ENCODE measurements at regions of chr6 and their contacts with region 1.

Region 1: DNA sequence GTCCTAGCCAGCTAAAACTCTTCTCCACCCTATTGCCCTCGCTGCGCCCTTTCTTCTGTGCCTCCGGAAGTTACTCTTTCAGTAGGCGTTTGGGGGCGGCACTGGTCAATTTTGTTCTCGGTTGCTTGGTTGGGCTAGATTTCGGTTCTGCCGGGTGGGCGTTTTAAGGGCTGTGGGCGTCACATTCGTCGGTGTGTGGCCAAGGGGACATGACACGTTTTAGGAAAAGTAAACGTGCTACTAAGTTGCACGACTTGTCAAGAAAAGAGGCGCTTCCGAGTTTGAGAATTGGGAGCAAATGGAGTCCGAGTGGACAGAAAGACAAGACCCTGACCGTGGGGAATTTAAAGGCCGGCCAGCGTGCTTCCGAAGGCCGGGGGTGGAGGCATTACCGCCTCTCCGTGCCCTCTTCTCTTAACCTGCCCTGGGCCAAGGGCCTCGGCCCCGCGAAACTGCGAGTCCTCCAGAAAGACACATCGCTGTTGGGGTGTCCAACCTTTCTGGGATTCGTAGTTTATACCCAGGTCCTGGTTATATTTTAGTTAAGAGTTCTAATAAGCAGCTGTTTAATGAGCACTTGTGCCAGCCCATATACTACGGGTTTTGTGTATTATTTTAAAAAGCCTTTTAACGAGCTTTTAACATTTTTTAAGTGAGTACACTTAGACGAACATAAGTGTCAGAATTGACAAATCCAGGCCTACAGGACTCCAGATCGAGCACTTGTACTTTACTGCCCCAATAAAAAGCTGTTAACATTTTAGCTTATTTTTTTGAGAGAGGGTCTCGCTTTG is 661 bp upstream of the BAG6 start:
- DNase-seq: peak; percentile 94 to 99 (median 96)
- ATAC-seq: peak; percentile 83
- H3K4me3 ChIP-seq: peak overlapping the region; percentile 73
- H3K27ac ChIP-seq: peak overlapping the region; percentile 98
- H3K4me1 ChIP-seq: peaks cover 22 to 26% of the 10 kb centered on the region in 2 experiments
- H3K27me3 ChIP-seq: no peaks in the 10 kb centered on the region
- CTCF ChIP-seq: peak; percentile 43 to 72 (median 54)
- EP300 ChIP-seq: no peak; the same call in 1 of the 2 replicates
- POLR2A ChIP-seq: peak; percentile 98
- RAD21 ChIP-seq: peak in 1 of 2 experiments; percentile 52; a peak in 2 of 4 replicates

Region 2: DNA sequence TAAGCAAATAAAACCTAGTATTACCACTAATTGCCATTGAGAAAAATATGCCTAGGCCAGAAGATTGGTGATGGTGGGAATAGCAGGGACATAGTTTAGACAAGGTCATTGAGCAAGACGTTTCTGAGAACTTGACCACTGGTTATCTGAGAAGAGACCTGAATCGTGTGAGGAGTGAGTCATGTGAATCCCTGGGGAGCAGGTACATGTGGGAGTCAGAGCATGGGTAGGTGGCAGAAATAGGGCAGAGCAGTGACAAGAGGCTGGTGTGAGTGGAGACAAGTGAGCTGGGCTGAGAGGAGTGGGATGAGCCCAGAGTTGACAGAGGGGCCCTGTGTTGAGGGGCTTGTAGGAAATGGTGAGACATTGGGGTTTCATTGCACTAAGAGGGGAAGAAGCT is 233.3 kb before region 1 on chr6:
- CTCF ChIA-PET with region 1: no interaction called
- POLR2A ChIA-PET with region 1: no interaction called
- in situ Hi-C with region 1: no loop called
- intact Hi-C with region 1: no loop called
- DNase-seq: peak in 1 of 4 experiments; percentile 28
- ATAC-seq: no peak
- H3K4me3 ChIP-seq: no peak overlapping the region
- H3K27ac ChIP-seq: no peak overlapping the region
- H3K4me1 ChIP-seq: peaks cover 0 to 5% of the 10 kb centered on the region in 2 experiments; a peak in 3 of 5 replicates
- H3K27me3 ChIP-seq: peaks cover 0 to 14% of the 10 kb centered on the region in 2 experiments; a peak in 2 of 5 replicates
- CTCF ChIP-seq: no peak
- EP300 ChIP-seq: no peak
- POLR2A ChIP-seq: no peak
- RAD21 ChIP-seq: no peak

Region 3: DNA sequence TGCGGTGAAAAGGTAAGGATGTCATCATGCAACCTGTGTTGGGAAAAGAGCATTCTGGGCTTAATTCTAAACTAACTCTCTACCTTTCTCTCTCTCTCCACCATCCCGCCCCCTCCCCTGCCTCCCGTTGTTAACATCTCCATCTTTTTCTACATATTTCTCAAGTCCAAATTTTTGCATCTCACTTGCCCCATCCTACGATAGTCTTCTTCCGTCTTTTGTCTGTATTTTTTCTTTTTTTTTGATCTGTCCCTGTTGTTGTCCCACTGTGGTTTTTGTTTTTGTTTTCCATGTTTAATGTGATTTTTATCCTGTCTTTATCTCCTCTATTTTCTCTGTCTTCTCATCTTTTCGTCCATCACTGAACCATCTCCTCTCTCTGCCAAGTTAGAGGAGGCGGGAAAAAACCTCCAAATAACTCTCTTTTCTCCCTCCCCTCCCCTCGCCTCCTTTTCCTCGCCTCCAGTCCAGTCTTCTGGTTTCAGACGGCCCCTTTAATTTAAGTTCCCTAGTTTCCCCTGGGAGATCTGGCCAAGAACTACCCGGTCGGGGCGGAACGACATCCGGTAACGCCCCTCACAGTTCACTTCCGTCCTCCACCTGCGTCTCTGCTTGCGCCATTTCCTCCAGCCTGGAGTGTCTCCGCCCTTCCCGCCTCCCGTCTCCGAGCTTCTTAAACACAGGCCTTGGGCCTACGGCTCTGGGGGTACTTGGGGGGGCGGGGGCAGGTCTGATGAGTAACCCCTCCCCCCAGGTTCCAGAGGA is 106.0 kb before region 1 on chr6 and contains the start of gene NFKBIL1:
- CTCF ChIA-PET with region 1: no interaction called
- POLR2A ChIA-PET with region 1: interaction called, 14 read pairs
- in situ Hi-C with region 1: no loop called
- intact Hi-C with region 1: loop called (anchors 1 kb)
- DNase-seq: peak; percentile 92 to 100 (median 94)
- ATAC-seq: peak; percentile 93
- H3K4me3 ChIP-seq: peak within 1 kb of the TSS; percentile 52
- H3K27ac ChIP-seq: peak within 1 kb of the TSS; percentile 81
- H3K4me1 ChIP-seq: peaks cover 10 to 14% of the 10 kb centered on the region in 2 experiments; a peak in 4 of 5 replicates
- H3K27me3 ChIP-seq: no peaks in the 10 kb centered on the region
- CTCF ChIP-seq: no peak; a peak in 1 of 6 replicates
- EP300 ChIP-seq: peak; percentile 37; the same call in 1 of the 2 replicates
- POLR2A ChIP-seq: peak; percentile 71
- RAD21 ChIP-seq: peak in 1 of 2 experiments; percentile 14; a peak in 1 of 4 replicates
- polyA plus RNA-seq, gene NFKBIL1: 0.49 to 0.59 TPM

Region 4: DNA sequence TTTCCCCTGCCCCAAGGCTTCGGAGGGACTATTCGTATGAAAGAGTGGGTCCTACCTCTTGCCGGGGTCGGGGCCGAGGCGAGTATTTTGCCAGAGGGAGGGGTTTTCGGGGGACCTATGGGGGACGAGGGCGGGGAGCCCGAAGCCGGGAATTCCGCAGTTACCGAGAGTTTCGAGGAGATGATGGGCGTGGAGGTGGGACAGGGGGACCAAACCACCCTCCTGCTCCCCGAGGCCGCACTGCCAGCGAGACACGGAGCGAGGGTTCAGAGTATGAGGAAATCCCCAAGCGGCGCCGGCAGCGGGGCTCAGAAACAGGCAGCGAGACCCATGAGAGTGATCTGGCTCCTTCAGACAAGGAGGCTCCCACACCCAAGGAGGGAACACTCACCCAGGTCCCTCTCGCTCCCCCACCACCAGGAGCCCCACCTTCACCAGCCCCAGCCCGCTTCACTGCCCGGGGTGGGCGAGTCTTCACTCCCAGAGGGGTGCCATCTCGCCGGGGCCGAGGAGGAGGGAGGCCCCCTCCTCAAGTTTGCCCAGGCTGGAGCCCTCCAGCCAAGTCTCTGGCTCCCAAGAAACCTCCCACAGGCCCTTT is 21.3 kb before region 1 on chr6:
- CTCF ChIA-PET with region 1: no interaction called
- POLR2A ChIA-PET with region 1: interaction called, 190 read pairs
- in situ Hi-C with region 1: no loop called
- intact Hi-C with region 1: no loop called
- DNase-seq: no peak
- ATAC-seq: peak; percentile 32
- H3K4me3 ChIP-seq: no peak overlapping the region
- H3K27ac ChIP-seq: no peak overlapping the region
- H3K4me1 ChIP-seq: peaks cover 0 to 26% of the 10 kb centered on the region in 2 experiments; a peak in 1 of 5 replicates
- H3K27me3 ChIP-seq: no peaks in the 10 kb centered on the region
- CTCF ChIP-seq: no peak
- EP300 ChIP-seq: no peak
- POLR2A ChIP-seq: no peak
- RAD21 ChIP-seq: no peak

Region 5: DNA sequence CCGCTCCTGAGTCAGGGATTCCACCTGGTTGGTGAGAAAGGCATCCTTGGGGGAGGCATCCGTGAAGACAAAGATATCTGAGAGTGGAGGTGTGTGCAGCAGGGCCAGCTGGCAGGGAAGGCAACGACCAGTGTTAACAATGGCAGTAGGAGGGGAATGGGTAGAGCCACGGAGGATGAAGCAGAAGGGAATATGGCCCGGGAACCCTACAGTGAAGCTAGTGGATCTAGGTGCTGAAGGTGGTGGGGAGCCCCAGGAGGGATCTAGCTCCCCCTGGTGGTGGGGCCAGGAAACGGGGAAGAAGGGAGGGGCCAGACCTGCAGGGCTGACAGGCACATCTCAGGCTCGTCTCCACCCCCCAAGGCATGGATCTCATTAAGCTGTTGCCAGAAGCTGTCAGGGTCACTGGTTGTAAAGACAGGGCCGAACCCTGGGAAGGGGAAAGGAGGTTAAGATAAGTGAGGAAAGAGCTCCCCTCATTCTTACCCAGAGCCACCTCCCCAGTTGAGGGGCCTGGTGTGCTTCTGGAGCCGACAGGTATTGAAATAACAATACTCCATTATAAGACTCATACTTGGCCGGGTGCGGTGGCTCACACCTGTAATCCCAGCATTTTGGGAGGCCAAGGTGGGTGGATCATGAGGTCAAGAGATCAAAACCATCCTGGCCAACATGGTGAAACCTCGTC is 116.7 kb after region 1 on chr6:
- CTCF ChIA-PET with region 1: no interaction called
- POLR2A ChIA-PET with region 1: interaction called, 16 read pairs
- in situ Hi-C with region 1: no loop called
- intact Hi-C with region 1: no loop called
- DNase-seq: peak; percentile 98 to 100 (median 100)
- ATAC-seq: peak; percentile 91
- H3K4me3 ChIP-seq: no peak overlapping the region
- H3K27ac ChIP-seq: peak overlapping the region; percentile 26; the same call in 2 of the 3 replicates
- H3K4me1 ChIP-seq: peaks cover 24 to 68% of the 10 kb centered on the region in 2 experiments
- H3K27me3 ChIP-seq: no peaks in the 10 kb centered on the region
- CTCF ChIP-seq: peak; percentile 98 to 100 (median 99)
- EP300 ChIP-seq: peak; percentile 28
- POLR2A ChIP-seq: no peak
- RAD21 ChIP-seq: peak; percentile 99 to 100

Region 6: GRCh38 chr6:31822036-31822821 is 169.1 kb after region 1 on chr6:
- CTCF ChIA-PET with region 1: no interaction called
- POLR2A ChIA-PET with region 1: interaction called, 16 read pairs
- in situ Hi-C with region 1: no loop called
- intact Hi-C with region 1: no loop called
- DNase-seq: peak; percentile 95 to 100 (median 96)
- ATAC-seq: peak; percentile 77
- H3K4me3 ChIP-seq: peak overlapping the region; percentile 59
- H3K27ac ChIP-seq: peak overlapping the region; percentile 99
- H3K4me1 ChIP-seq: peaks cover 51 to 58% of the 10 kb centered on the region in 2 experiments
- H3K27me3 ChIP-seq: no peaks in the 10 kb centered on the region
- CTCF ChIP-seq: no peak; a peak in 1 of 6 replicates
- EP300 ChIP-seq: peak; percentile 77
- POLR2A ChIP-seq: peak; percentile 91
- RAD21 ChIP-seq: no peak; a peak in 1 of 4 replicates

Region 7: DNA sequence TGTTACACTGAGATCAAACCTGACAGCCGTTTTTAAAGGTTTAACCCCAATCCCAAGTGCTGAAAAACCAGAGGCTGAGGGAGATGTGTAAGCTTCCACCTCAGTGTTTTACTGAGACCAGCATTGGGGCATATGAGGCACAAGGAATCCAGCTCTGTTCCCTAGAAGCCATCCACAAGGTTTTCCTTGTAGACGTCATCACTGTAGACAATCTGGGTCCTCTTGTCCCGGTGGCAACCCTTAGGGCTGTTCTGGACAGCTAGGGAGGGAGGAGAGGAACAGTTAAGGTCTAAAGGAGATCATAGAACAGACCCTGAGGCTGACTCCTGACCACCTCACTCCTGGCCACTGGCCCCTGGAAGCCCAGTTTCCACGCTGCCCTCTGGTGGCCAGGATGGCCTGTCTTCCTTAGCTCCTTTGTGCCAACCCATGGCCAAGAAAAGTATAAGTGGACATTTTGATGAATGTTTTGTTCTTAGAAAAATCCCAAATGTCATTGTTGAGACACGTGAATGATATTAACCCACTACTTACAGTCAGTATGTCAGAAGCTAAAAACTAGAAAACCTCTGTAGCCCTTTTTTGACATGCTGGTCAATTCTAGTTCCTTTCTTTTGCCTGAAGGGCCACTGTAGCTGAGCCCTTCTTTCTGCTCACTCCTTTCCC is 299.2 kb after region 1 on chr6:
- CTCF ChIA-PET with region 1: no interaction called
- POLR2A ChIA-PET with region 1: no interaction called
- in situ Hi-C with region 1: no loop called
- intact Hi-C with region 1: no loop called
- DNase-seq: peak; percentile 71 to 78 (median 73)
- ATAC-seq: peak; percentile 86
- H3K4me3 ChIP-seq: no peak overlapping the region
- H3K27ac ChIP-seq: 0 out of 3 replicates have a peak overlapping the region, but pooled peaks have one; percentile 4
- H3K4me1 ChIP-seq: peaks cover 17 to 24% of the 10 kb centered on the region in 2 experiments
- H3K27me3 ChIP-seq: no peaks in the 10 kb centered on the region; a peak in 1 of 5 replicates
- CTCF ChIP-seq: peak; percentile 94 to 97 (median 94)
- EP300 ChIP-seq: no peak
- POLR2A ChIP-seq: no peak
- RAD21 ChIP-seq: peak; percentile 68 to 85

Region 8: DNA sequence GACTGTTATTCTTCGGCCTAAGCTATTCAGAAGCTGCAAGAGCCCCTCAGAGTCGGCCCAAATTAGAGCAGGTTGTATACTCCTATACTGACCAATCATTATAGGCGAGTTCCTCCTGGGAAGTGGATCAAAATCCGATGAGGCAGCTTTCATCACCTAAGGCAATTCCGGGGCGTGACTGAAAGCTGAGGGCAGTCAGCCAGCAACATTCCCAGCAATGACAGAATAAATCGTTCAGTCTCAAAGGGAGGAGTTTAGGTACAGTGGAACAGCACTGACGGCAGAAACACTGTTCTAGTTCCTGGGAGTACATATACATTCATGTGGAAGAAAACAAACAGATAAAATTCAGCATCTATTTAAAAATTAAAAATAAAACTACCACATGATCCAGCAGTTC is 1099.5 kb after region 1 on chr6:
- CTCF ChIA-PET with region 1: no interaction called
- POLR2A ChIA-PET with region 1: no interaction called
- in situ Hi-C with region 1: no loop called
- intact Hi-C with region 1: no loop called
- DNase-seq: no peak
- ATAC-seq: no peak
- H3K4me3 ChIP-seq: no peak overlapping the region
- H3K27ac ChIP-seq: no peak overlapping the region
- H3K4me1 ChIP-seq: no peaks in the 10 kb centered on the region
- H3K27me3 ChIP-seq: peaks cover 0 to 14% of the 10 kb centered on the region in 2 experiments; a peak in 2 of 5 replicates
- CTCF ChIP-seq: no peak
- EP300 ChIP-seq: no peak
- POLR2A ChIP-seq: no peak
- RAD21 ChIP-seq: no peak